Breast epithelium (tissue), 4 donors: ENCODE measurements at regions of chr6 and their contacts with region 1.

Region 1: DNA sequence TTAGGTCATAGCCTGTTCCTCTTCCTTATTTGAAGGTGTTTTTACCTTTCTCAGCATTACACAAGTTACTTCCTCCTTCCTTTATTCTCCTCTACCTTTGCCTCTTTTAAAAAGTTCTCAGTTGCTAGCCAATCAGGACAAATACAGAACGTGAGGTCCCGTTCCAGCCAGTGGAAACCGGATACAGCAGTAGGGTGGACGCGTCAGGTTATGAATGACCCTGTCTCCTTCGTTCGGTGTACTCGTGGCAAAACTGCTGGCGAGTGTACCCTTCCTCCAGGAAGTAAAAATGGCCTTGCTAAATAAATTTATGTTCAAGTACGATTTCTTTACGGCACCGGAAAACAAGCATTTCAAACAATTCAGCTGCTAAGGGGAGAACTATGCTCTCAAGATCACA is 77.0 kb upstream of the MLN start:
- DNase-seq: no peak
- H3K4me3 ChIP-seq: no peak overlapping the region
- H3K27ac ChIP-seq: no peak overlapping the region
- H3K4me1 ChIP-seq: no peaks in the 10 kb centered on the region
- H3K27me3 ChIP-seq: no peaks in the 10 kb centered on the region
- CTCF ChIP-seq: no peak
- POLR2A ChIP-seq: no peak

Region 2: GRCh38 chr6:33513213-33513612 is 367.6 kb before region 1 on chr6:
- intact Hi-C with region 1: no loop called
- DNase-seq: no peak
- H3K4me3 ChIP-seq: no peak overlapping the region
- H3K27ac ChIP-seq: no peak overlapping the region
- H3K4me1 ChIP-seq: no peaks in the 10 kb centered on the region
- H3K27me3 ChIP-seq: no peaks in the 10 kb centered on the region
- CTCF ChIP-seq: no peak
- POLR2A ChIP-seq: no peak

Region 3: GRCh38 chr6:33839399-33840047 is 41.2 kb before region 1 on chr6:
- intact Hi-C with region 1: loop called (anchors 1 kb)
- DNase-seq: no peak
- H3K4me3 ChIP-seq: no peak overlapping the region
- H3K27ac ChIP-seq: peak overlapping the region in 1 of 2 donors; percentile 0
- H3K4me1 ChIP-seq: peaks cover 5 to 16% of the 10 kb centered on the region in 2 donors
- H3K27me3 ChIP-seq: no peaks in the 10 kb centered on the region
- CTCF ChIP-seq: no peak
- POLR2A ChIP-seq: no peak

Region 4: DNA sequence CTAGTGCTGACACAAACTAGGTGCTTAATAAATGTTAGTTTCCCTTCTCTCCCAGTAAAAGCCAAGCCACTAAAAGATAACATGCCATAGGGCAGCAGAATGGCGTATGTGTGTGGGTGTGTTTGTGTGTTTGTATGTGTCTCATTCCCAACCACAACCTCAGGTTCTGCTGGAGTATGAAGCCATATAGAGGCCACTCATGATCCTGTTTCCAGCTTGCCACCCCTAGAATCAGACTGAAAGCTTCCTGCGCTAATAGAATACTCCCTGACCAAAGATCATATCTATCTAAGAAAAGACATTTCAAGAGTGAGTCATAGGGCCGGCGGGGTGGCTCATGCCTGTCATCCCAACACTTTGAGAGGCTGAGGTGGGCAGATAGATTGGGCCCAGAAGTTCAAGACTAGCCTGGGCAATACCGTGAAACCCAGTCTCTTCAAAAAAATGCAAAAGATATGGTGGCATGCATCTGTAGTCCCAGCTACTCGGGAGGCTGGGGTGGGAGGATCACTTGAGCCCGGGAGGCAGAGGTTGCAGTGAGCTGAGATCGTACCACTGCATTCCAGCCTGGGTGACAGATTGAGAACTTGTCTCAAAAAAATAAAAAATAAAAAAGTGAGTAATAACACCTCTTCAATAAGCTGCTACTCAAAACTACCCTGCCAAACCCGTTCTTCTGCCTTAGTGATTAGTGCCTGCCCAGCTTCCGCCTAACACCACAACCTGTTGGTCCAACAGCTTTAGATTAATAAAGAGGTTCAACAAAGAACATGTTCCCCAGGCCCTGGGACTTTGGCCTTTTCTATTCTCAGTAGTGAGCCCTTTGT is 864.7 kb after region 1 on chr6:
- intact Hi-C with region 1: no loop called
- DNase-seq: peak in 1 of 2 donors; percentile 69
- H3K4me3 ChIP-seq: no peak overlapping the region
- H3K27ac ChIP-seq: peak overlapping the region; percentile 76 to 80
- H3K4me1 ChIP-seq: no peaks in the 10 kb centered on the region
- H3K27me3 ChIP-seq: no peaks in the 10 kb centered on the region
- CTCF ChIP-seq: no peak
- POLR2A ChIP-seq: no peak